Left ventricle myocardium superior (tissue), 1 donor: ENCODE measurements at regions of chr12 and their contacts with region 1.

Region 1: GRCh38 chr12:123905319-123905925 is 67.2 kb downstream of the CCDC92 start:
- DNase-seq: no peak
- ATAC-seq: peak; percentile 50

Region 2: DNA sequence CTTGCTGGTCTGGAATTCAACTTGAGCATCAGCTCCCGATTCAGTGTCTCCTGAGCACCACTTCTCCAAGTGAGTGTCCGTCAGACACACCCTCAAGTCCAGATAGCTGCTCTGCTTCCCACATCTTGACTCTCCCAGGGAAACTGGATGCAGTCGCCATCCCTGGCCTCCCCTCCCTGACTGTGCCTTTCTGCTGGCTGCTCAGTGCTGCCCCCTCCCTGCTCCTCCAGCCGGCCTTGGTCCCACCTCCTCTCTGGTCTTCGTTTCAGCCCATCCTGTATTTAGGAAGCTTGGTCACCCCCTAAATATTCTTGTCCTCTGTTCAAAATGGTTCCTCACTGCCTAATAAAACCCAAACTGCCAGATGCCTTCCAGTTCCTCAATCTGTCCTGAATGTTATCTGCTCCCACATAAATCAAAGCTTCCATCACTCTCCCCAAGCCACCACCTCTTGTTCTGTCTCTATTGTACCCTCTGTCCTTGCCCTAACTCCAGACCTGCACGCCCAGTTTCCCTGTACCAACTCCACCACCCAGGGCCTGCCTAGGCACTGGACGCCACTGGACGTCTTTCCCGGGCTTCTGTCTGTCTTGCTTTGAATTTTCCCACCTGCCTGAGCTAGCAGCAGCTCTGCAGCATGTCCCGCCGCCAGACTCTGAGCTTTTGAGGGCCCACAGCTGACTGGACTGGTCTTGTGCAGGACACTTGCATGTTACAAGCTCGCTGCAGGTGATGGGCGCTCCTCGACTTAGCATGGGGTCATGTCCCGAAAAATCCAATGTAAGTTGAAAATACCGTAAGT is 33.5 kb after region 1 on chr12:
- intact Hi-C with region 1: no loop called
- DNase-seq: no peak
- ATAC-seq: no peak

Region 3: DNA sequence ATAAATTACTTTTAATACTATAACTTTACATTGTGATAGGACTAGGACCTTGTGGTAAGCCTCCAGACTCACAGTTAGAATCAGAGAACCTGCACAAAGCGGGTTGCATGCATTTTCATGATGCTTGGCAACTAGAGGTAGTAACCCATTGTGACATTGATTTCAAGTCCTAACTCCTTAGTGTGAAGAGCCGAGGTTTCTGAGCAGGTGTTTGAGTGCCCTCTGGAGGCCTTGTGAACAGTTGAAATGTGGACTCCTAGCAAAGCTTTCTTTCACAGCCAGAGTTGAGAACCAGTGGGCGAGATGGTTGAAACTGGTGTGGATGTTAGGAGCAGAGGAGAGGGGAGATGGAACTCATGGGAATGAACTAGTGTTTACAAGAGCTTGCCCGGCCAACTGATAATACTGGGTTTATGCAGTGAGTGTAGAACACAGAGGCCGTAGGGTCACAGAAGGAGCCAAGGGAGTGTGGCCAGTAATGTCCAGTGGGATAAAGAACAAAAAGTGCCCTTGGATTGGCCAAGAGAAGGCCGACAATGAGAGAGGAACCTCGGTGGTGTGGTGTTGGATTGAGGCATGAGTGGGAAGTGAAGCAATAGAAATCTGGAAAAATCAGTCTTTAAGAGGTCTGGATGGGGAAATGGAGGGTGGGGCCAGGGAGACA is 78.5 kb after region 1 on chr12:
- intact Hi-C with region 1: loop called (anchors 10 kb)
- DNase-seq: peak; percentile 39
- ATAC-seq: peak; percentile 77